ENCODE measurements at regions of chr3 and their contacts with region 1.

Region 1: GRCh38 chr3:128095222-128095703 is 28.3 kb downstream of the RUVBL1 start:
- DNase-seq: peak; percentile 80
- CTCF ChIP-seq: peak; percentile 88

Region 2: GRCh38 chr3:128497387-128498126 is 402.3 kb after region 1 on chr3:
- in situ Hi-C with region 1: loop called (anchors 25 kb)
- DNase-seq: peak; percentile 87
- CTCF ChIP-seq: peak; percentile 85

Region 3: GRCh38 chr3:128617557-128618397 is 522.5 kb after region 1 on chr3:
- in situ Hi-C with region 1: loop called (anchors 25 kb)
- DNase-seq: peak; percentile 99
- CTCF ChIP-seq: peak; percentile 93